ENCODE measurements at regions of chr2 and their contacts with region 1.

Region 1: GRCh38 chr2:64873472-64873924 is 115.7 kb upstream of the SLC1A4 start:
- DNase-seq: peak; percentile 68 to 88 (median 75)
- ATAC-seq: peak in 3 of 4 donors; percentile 76 to 82 (median 79)
- H3K4me3 ChIP-seq: peak overlapping the region in 8 of 12 donors; percentile 4 to 49 (median 30)
- H3K27ac ChIP-seq: no peak overlapping the region
- H3K4me1 ChIP-seq: peaks cover 0 to 22% (median 15%) of the 10 kb centered on the region in 12 donors
- H3K27me3 ChIP-seq: no peaks in the 10 kb centered on the region
- CTCF ChIP-seq: peak; percentile 91 to 99 (median 96)
- POLR2A ChIP-seq: peak in 1 of 2 donors; percentile 19

Region 2: DNA sequence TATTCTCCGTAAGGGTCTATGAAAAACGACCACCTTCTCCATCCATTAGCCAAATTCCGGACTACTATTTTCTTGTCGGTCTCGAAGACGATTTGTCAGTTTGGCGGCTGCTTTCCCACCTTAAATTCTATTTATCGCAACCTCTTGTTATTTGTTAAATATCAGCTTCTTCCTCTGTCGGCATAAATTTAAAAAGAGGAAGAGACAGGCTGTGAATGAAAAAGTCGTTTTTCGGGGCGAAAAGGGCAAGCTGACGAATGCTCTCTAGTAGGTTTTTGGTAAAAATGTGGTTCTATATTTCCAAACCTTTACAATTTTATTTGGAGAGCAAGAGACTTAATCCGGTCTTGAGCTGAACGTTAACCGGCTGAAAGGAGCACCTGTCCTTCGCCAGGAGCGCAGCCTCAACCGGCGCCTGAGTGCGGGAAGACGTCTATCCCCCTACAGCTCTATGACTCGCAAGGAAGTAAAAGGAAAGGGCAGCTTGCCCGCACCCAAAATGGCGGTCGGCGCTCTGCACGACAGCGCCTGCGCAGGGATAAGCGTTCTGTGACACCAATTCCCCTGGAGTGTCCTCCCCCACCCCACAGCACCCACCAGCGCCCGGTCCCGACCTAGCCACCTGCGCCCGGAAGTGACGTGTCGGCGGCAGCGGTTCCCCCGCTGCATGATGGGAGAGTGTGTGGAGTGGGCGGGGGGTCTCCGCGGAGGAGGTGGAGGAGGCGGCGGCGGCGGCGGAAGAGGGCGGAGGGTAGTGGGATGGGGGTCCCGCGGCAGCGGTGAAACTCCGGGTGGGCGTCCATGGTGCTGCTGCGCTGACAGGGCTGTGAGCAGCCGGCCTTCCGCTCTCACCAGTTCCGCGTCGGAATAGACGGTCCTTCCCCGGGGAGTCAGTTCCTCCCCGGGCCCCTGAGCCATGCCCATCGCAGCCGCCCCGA is 349.6 kb before region 1 on chr2 and contains the start of gene AFTPH:
- intact Hi-C with region 1: loop called in 7 of 10 experiments (anchors 2 to 5 kb)
- DNase-seq: peak; percentile 99 to 100 (median 99)
- ATAC-seq: peak; percentile 99 to 100 (median 99)
- H3K4me3 ChIP-seq: peak within 1 kb of the TSS; percentile 70 to 97 (median 94)
- H3K27ac ChIP-seq: peak within 1 kb of the TSS; percentile 85 to 98 (median 94)
- H3K4me1 ChIP-seq: peaks cover 0 to 42% (median 28%) of the 10 kb centered on the region in 12 donors
- H3K27me3 ChIP-seq: no peaks in the 10 kb centered on the region
- CTCF ChIP-seq: no peak
- POLR2A ChIP-seq: peak in 1 of 2 donors; percentile 77
- total RNA-seq, gene AFTPH: 9.2 to 15.2 (median 11.4) TPM

Region 3: DNA sequence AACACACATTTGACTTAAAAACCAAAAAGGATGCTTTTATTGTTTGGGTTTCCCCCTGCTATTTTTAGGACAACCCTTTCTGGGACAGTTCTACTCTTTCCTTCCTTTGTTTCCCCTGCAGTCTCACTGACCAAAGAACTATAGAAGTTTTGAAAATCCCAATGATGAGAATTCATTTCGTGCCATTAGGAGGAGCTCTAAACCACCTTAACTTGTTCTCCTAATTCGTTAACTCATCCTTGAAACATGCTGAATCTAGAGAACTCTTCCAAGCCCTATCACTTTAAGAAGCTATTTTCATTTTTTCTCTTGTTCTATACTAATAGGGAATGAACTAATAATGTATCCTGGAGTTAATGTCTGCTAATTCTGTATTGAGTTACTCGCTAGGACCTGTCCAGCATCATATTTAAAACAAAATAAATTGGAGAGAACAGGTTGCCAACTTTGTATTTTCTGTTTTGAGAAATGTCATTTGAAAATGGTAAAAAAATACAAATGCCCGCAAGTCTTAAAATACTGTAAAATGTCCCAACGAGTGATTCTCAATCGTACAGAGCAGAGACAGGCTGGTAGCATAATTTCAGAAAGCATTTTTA is 286.5 kb before region 1 on chr2:
- intact Hi-C with region 1: loop called in 8 of 10 experiments (anchors 2 to 5 kb)
- DNase-seq: no peak
- ATAC-seq: peak in 3 of 4 donors; percentile 64 to 70 (median 66)
- H3K4me3 ChIP-seq: no peak overlapping the region
- H3K27ac ChIP-seq: peak overlapping the region in 1 of 12 donors; percentile 17
- H3K4me1 ChIP-seq: peaks cover 0 to 11% (median 0%) of the 10 kb centered on the region in 12 donors
- H3K27me3 ChIP-seq: no peaks in the 10 kb centered on the region
- CTCF ChIP-seq: peak; percentile 40 to 78 (median 69)
- POLR2A ChIP-seq: no peak

Region 4: DNA sequence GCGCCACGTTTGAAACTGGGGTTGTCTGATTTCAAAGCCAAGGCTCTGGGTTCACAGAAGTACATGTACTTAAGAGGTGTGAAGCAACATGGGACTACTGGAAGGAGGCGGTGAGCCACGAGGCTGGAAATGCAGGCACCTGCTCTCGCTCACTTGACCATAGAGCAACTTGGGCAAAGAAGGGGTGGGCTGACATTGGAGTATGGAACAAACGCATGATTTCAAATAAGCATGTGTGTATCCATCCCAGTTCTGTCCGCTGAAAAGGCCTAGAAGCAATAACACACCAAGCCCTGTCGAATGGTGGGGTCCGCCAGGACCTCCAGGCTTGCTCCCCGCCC is 353.6 kb after region 1 on chr2:
- intact Hi-C with region 1: no loop called
- DNase-seq: no peak
- ATAC-seq: peak; percentile 19 to 40 (median 29)
- H3K4me3 ChIP-seq: peak overlapping the region; percentile 68 to 100 (median 94)
- H3K27ac ChIP-seq: peak overlapping the region in 11 of 12 donors; percentile 81 to 100 (median 97)
- H3K4me1 ChIP-seq: peaks cover 6 to 46% (median 27%) of the 10 kb centered on the region in 12 donors
- H3K27me3 ChIP-seq: no peaks in the 10 kb centered on the region
- CTCF ChIP-seq: no peak
- POLR2A ChIP-seq: no peak